ENCODE measurements at regions of chr3 and their contacts with region 1.

Region 1: DNA sequence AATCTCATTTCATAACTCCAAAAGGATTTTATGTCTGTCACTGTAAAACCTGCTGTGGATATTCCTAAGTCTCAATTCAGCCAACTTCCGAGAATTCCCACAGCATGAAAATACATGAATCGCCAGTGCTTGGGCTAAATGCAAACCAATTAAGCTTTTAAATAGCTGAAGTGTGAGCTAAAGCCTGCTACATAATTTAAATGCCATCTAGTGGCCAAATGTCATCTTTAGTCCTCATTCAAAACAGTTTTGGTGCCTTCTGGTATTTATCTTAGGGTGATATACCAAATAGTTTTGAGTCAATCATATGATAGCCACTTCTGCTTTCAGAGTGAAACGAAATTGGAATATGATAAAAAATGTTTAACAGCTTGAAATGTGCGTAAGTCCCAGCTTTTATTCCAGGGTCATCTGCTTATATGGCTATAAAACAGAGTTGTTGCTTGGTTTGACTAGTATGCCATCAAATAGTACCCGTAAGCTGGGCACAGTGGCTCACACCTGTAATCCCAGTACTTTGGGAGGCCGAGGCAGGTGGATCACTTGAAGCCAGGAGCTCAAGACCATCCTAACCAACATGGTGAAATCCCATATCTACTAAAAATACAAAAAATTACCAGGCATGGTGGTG is 41.8 kb upstream of the CCNL1 start:
- DNase-seq: peak; percentile 70
- ATAC-seq: peak; percentile 76
- H3K4me3 ChIP-seq: no peak overlapping the region
- H3K27ac ChIP-seq: no peak overlapping the region
- H3K4me1 ChIP-seq: no peaks in the 10 kb centered on the region
- H3K27me3 ChIP-seq: no peaks in the 10 kb centered on the region
- CTCF ChIP-seq: peak; percentile 78

Region 2: DNA sequence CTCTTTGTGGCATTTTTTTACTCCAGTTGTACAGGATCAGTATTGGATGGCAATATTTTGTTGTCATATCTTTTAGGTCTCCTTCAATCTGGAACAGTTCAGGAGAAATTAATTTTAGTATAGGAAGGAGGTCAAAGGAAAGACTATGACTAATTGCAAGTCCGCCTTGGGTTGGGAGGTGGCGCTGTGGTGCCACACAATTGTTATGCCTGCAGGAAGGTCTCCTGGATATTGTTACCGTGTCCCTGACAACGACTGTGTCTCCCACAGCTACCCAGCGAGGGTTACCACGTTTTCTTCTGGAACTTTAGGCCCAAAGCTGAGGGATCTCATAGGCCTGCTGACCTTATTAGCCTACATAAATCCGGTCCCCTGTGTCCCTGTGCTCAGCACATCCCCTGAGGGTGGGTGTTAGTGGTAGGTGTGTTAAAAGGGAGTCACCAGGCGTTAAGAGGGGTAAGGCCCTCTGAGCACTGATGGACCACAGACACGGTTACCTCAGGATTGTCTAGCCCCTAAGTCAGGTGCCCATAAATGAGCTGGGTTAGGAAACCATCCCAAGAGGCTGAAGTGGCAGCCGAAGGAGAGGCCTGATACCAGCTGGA is 1049.8 kb before region 1 on chr3:
- CTCF ChIA-PET with region 1: interaction called, 4 read pairs
- POLR2A ChIA-PET with region 1: no interaction called
- intact Hi-C with region 1: loop called (anchors 1 kb)
- DNase-seq: peak; percentile 80
- ATAC-seq: peak; percentile 80
- H3K4me3 ChIP-seq: no peak overlapping the region
- H3K27ac ChIP-seq: no peak overlapping the region
- H3K4me1 ChIP-seq: no peaks in the 10 kb centered on the region
- H3K27me3 ChIP-seq: no peaks in the 10 kb centered on the region
- CTCF ChIP-seq: peak; percentile 88

Region 3: GRCh38 chr3:157239082-157239704 is 37.4 kb after region 1 on chr3:
- CTCF ChIA-PET with region 1: no interaction called
- POLR2A ChIA-PET with region 1: no interaction called
- intact Hi-C with region 1: loop called (anchors 1 kb)
- DNase-seq: peak; percentile 81
- ATAC-seq: peak; percentile 98
- H3K4me3 ChIP-seq: no peak overlapping the region
- H3K27ac ChIP-seq: no peak overlapping the region
- H3K4me1 ChIP-seq: peaks cover 7% of the 10 kb centered on the region; the same call in 1 of the 2 replicates
- H3K27me3 ChIP-seq: no peaks in the 10 kb centered on the region
- CTCF ChIP-seq: peak; percentile 97

Region 4: GRCh38 chr3:157436583-157437291 is 235.0 kb after region 1 on chr3 and contains the start of gene PTX3:
- CTCF ChIA-PET with region 1: no interaction called
- POLR2A ChIA-PET with region 1: interaction called, 7 read pairs
- intact Hi-C with region 1: loop called (anchors 2 kb)
- DNase-seq: peak; percentile 90
- ATAC-seq: peak; percentile 51
- H3K4me3 ChIP-seq: peak within 1 kb of the TSS; percentile 82
- H3K27ac ChIP-seq: peak within 1 kb of the TSS; percentile 68
- H3K4me1 ChIP-seq: peaks cover 16% of the 10 kb centered on the region
- H3K27me3 ChIP-seq: no peaks in the 10 kb centered on the region
- CTCF ChIP-seq: no peak
- total RNA-seq, gene PTX3: 24.4 and 27.3 TPM in 2 replicates

Region 5: GRCh38 chr3:157493627-157494550 is 292.1 kb after region 1 on chr3:
- CTCF ChIA-PET with region 1: interaction called, 5 read pairs
- POLR2A ChIA-PET with region 1: no interaction called
- intact Hi-C with region 1: loop called (anchors 1 kb)
- DNase-seq: peak; percentile 83
- ATAC-seq: peak; percentile 68
- H3K4me3 ChIP-seq: no peak overlapping the region
- H3K27ac ChIP-seq: no peak overlapping the region
- H3K4me1 ChIP-seq: peaks cover 11% of the 10 kb centered on the region
- H3K27me3 ChIP-seq: no peaks in the 10 kb centered on the region
- CTCF ChIP-seq: peak; percentile 92

Region 6: DNA sequence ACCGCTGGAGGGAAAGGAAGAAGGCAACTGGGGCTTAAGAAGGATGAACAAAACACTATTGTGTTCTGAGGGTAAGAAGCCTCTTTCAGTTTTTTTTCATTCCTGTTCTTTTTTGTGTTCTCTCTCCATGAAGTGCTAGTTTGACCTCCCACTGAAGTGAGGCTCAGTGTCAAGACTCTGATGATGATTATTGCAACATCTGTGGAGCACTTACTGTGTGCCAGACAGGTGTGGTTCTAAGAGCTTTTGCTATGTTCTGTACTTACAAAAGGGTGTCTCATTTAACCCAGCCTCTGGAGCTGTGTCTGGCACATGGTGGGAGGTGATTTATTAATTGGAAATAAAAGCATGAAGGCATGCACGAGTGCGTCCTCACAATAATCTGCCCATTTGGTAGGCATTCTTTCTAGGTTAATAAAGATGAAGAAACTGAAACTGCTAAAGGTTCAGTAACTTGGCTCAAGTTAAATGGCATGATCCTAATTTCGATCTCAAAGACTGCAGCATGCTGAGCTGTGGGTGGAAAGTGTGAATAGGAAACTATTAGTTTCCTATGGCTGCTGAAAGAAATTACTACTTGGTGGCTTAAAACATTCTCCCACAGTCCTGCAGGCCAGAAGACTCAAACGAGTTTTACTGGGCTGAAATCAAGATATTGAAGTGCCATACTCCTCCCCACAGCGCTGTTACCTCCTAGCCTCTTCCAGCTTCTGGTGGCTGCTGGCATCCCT is 339.9 kb after region 1 on chr3:
- CTCF ChIA-PET with region 1: no interaction called
- POLR2A ChIA-PET with region 1: no interaction called
- intact Hi-C with region 1: no loop called
- DNase-seq: no peak
- ATAC-seq: no peak
- H3K4me3 ChIP-seq: no peak overlapping the region
- H3K27ac ChIP-seq: no peak overlapping the region
- H3K4me1 ChIP-seq: 0 out of 2 replicates have a peak, but pooled peaks cover 4% of the 10 kb centered on the region
- H3K27me3 ChIP-seq: no peaks in the 10 kb centered on the region
- CTCF ChIP-seq: no peak

Measured in PC-3 (cell line).